ENCODE measurements at regions of chr17 and their contacts with region 1.

Region 1: GRCh38 chr17:49567871-49568694 is 7.6 kb upstream of the NXPH3 start:
- DNase-seq: peak; percentile 88
- H3K4me3 Mint-ChIP-seq: peak overlapping the region; percentile 43
- H3K27ac Mint-ChIP-seq: no peak overlapping the region
- H3K4me1 Mint-ChIP-seq: peaks cover 27% of the 10 kb centered on the region
- H3K27me3 Mint-ChIP-seq: peaks cover 66% of the 10 kb centered on the region

Region 2: DNA sequence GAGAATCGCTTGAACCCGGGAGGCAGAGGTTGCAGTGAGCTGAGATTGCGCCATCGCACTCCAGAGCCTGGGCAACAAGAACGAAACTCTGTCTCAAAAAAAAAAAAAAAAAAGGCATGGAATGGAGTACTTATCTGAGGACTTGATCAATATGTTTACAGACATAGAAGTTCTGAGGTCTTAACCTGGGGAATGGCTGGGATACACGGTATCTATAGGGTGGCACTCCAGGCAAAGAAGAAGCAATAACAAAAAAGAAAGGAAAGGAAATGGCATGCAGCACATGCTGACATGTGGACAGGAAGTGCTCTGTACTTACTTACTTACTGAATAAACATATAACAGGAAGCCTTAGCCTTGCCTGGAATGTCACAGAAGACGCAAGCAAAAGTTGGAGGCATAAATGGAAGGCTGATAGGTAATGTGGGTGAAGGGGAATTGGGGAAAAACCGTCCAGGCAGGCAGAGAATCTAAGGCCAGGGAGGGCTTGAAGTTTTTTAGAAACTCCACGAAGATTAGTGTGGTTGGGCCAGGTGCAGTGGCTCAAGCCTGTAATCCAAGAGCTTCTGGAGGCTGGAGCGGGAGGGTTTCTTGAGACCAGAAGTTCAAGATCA is 119.9 kb after region 1 on chr17:
- CTCF ChIA-PET with region 1: interaction called, 377 read pairs
- DNase-seq: peak; percentile 40
- H3K4me3 Mint-ChIP-seq: peak overlapping the region; percentile 63
- H3K27ac Mint-ChIP-seq: peak overlapping the region; percentile 92
- H3K4me1 Mint-ChIP-seq: peaks cover 37% of the 10 kb centered on the region
- H3K27me3 Mint-ChIP-seq: peaks cover 5% of the 10 kb centered on the region

Region 3: GRCh38 chr17:49730078-49730784 is 162.1 kb after region 1 on chr17:
- CTCF ChIA-PET with region 1: no interaction called
- DNase-seq: no peak
- H3K4me3 Mint-ChIP-seq: no peak overlapping the region
- H3K27ac Mint-ChIP-seq: no peak overlapping the region
- H3K4me1 Mint-ChIP-seq: peaks cover 38% of the 10 kb centered on the region
- H3K27me3 Mint-ChIP-seq: no peaks in the 10 kb centered on the region